ENCODE measurements at regions of chr11 and their contacts with region 1.

Region 1: GRCh38 chr11:128157423-128158298 is 429.7 kb downstream of the ETS1 start:
- DNase-seq: peak; percentile 74
- H3K4me3 Mint-ChIP-seq: peak overlapping the region; percentile 50
- H3K27ac Mint-ChIP-seq: peak overlapping the region; percentile 70
- H3K4me1 Mint-ChIP-seq: peaks cover 10% of the 10 kb centered on the region
- H3K27me3 Mint-ChIP-seq: peaks cover 20% of the 10 kb centered on the region

Region 2: GRCh38 chr11:128029219-128029722 is 128.4 kb before region 1 on chr11:
- CTCF ChIA-PET with region 1: interaction called, 16 read pairs
- POLR2A ChIA-PET with region 1: no interaction called
- DNase-seq: no peak
- H3K4me3 Mint-ChIP-seq: no peak overlapping the region
- H3K27ac Mint-ChIP-seq: no peak overlapping the region
- H3K4me1 Mint-ChIP-seq: peaks cover 11% of the 10 kb centered on the region
- H3K27me3 Mint-ChIP-seq: peaks cover 27% of the 10 kb centered on the region

Region 3: GRCh38 chr11:128039140-128040021 is 118.3 kb before region 1 on chr11:
- CTCF ChIA-PET with region 1: interaction called, 11 read pairs
- POLR2A ChIA-PET with region 1: no interaction called
- DNase-seq: peak; percentile 87
- H3K4me3 Mint-ChIP-seq: peak overlapping the region; percentile 60
- H3K27ac Mint-ChIP-seq: peak overlapping the region; percentile 97
- H3K4me1 Mint-ChIP-seq: peaks cover 42% of the 10 kb centered on the region
- H3K27me3 Mint-ChIP-seq: no peaks in the 10 kb centered on the region

Region 4: GRCh38 chr11:128146926-128147605 is 10.6 kb before region 1 on chr11:
- CTCF ChIA-PET with region 1: interaction called, 20 read pairs
- POLR2A ChIA-PET with region 1: no interaction called
- DNase-seq: no peak
- H3K4me3 Mint-ChIP-seq: no peak overlapping the region
- H3K27ac Mint-ChIP-seq: no peak overlapping the region
- H3K4me1 Mint-ChIP-seq: no peaks in the 10 kb centered on the region
- H3K27me3 Mint-ChIP-seq: no peaks in the 10 kb centered on the region

Region 5: GRCh38 chr11:128172046-128172878 is 14.6 kb after region 1 on chr11:
- CTCF ChIA-PET with region 1: interaction called, 43 read pairs
- POLR2A ChIA-PET with region 1: no interaction called
- DNase-seq: peak; percentile 89
- H3K4me3 Mint-ChIP-seq: no peak overlapping the region
- H3K27ac Mint-ChIP-seq: no peak overlapping the region
- H3K4me1 Mint-ChIP-seq: peaks cover 6% of the 10 kb centered on the region
- H3K27me3 Mint-ChIP-seq: peaks cover 12% of the 10 kb centered on the region

Region 6: GRCh38 chr11:128261011-128261421 is 103.4 kb after region 1 on chr11:
- CTCF ChIA-PET with region 1: no interaction called
- POLR2A ChIA-PET with region 1: no interaction called
- DNase-seq: no peak
- H3K4me3 Mint-ChIP-seq: no peak overlapping the region
- H3K27ac Mint-ChIP-seq: no peak overlapping the region
- H3K4me1 Mint-ChIP-seq: peaks cover 1% of the 10 kb centered on the region
- H3K27me3 Mint-ChIP-seq: peaks cover 8% of the 10 kb centered on the region

Region 7: DNA sequence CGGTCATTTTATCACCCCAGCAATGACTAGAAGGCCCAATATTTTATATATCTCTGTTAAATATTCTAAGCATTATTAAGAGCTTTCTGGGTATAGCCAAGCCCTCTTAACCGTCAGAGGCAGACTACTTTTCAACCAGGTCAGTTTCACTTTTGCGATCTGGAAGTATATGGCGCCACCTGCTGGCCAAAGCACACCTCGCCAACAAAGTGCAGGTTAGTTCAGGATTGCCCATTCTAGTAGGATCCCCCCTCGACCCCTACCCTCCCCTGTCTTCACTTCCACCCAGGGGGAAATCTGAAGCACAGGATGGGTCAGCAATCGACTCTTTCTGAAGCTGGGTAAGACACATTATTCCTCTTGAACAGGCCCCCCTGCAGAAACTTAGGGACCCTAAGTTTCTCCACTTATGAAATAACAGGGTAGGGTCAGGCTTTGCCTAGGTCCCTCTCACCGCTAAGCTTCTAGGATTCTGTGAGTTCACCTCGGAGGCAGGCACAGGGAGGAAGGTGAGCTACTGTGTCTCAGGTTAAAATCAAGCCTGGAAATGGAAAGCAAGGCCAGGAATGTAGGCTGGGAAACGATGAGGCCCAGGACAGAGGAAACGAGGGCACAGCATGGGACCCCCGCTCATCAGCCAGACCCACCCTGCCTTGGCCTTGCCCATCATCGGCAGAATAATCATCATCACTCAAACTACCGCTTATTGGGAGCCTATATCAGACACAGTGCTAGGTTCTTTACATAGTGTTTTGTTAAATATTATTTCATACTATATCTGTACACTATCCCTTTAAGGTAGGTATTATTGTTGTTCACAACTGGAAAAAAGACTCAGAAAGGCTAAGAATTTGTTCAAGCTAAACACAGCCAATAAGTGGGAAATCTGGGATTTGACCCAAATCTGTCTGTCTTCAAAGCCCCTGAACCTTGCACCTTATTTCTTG is 673.8 kb after region 1 on chr11:
- CTCF ChIA-PET with region 1: interaction called, 13 read pairs
- POLR2A ChIA-PET with region 1: no interaction called
- DNase-seq: peak; percentile 90
- H3K4me3 Mint-ChIP-seq: peak overlapping the region; percentile 60
- H3K27ac Mint-ChIP-seq: peak overlapping the region; percentile 85
- H3K4me1 Mint-ChIP-seq: peaks cover 31% of the 10 kb centered on the region
- H3K27me3 Mint-ChIP-seq: no peaks in the 10 kb centered on the region

Measured in activated CD4-positive, alpha-beta T cell treated with anti-CD3 and anti-CD28 coated beads, Interleukin-2, amount 10 ng/mL, durations not matched to agents 7 days and 5 days (primary cell).